Natural killer cell (primary cell): ENCODE measurements at regions of chr21 and their contacts with region 1.

Region 1: DNA sequence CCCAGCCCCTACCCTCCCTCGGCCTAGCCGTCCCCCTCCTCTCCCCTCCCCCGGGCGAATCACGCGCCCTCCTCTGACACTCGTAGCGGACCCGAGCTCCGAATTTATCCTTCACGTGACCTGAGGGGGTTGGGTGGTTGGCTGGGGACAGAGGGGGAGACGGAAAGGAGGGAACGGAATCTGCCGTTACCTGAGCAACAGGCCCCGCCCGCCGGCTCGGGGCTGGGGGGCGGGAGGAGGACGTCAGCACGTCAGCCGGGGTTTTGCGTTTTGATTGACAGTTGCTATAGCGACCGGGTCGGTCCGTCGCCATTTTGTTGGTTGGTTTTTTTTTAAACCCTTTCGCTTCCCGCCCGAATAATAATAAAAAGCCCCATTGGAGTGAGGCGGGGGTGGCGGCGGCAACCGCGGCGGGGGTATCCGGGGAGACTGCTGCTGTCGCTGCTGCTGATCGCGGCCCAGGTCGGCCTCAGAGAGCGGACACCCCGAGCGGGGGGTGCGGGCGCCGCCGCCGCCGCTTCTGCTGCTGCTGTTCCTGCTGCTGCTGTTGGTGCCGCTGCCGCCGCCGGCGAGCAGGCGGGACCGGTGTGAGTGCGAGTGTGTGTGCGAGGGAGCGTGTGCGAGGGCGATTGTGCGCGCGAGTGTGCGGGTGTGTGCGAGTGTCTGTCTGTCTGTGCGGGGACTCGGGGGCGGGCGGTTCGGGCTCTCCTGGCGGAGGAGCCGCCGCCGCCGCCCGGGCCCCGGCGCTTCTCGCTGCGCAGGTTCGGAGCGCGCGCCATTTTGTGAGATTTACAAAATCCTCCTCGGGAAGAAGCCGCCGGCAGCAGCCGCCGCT is at the start of gene DYRK1A:
- DNase-seq: peak; percentile 97 to 100
- ATAC-seq: peak; percentile 75 to 93 (median 82)
- H3K4me3 ChIP-seq: peak within 1 kb of the TSS; percentile 76
- H3K4me3 Mint-ChIP-seq: peak within 1 kb of the TSS; percentile 99
- H3K27ac ChIP-seq: peak within 1 kb of the TSS; percentile 95
- H3K27ac Mint-ChIP-seq: peak within 1 kb of the TSS; percentile 97 to 100
- H3K4me1 ChIP-seq: peaks cover 19% of the 10 kb centered on the region
- H3K4me1 Mint-ChIP-seq: peaks cover 46 to 53% of the 10 kb centered on the region in 2 donors
- H3K27me3 ChIP-seq: no peaks in the 10 kb centered on the region
- H3K27me3 Mint-ChIP-seq: no peaks in the 10 kb centered on the region
- CTCF ChIP-seq: no peak
- total RNA-seq, gene DYRK1A: 149 to 166 (median 153) TPM

Region 2: DNA sequence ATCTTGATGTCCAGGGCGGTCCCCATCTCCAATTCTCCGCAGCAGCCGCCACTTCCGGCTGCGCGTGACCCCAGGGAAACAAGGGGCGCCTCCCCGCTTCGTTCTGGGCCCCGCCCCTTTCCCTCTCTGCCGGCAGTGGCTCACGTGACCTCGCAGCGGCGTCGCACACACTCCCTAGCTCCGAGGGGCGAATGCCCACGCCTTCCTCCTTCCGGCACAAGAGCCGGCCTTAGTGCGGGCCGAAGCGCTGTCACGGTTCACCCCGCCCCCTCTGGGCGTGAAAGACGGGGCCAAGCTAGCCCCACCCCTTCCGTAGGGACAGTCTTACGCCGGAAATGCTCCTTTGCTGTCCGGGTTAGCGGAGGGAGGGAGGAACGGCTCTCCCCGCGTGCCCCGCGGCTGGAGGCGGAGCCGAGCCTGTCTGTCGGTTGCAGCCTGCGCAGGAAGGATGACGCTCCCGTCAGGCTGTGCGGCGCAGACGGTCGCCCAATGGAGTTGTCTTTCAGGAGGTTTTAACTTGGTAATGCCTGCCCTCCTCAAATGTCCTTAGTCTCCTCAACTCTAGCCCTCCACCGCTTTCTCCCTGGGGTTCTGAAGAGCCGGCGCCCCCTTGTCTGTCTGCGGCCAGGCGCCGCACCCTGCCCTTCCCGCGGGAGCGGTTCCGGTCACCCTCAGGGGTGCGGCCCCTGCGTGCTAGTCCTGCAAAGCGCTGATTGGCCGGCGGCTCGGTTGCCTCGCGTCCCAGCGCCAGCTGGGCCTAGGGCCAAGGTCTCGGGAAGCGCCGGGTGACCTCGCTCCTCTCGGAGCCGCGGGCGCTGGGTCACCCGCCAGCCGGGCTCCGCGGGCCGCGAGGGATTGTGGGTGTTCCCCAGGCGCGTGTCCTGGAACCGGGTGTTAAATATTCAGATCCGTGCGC is 99.2 kb before region 1 on chr21 and contains the start of gene VPS26C:
- intact Hi-C with region 1: loop called (anchors 1 kb)
- DNase-seq: peak; percentile 94 to 99
- ATAC-seq: peak; percentile 85 to 95 (median 86)
- H3K4me3 ChIP-seq: peak within 1 kb of the TSS; percentile 90
- H3K4me3 Mint-ChIP-seq: peak within 1 kb of the TSS; percentile 97
- H3K27ac ChIP-seq: peak within 1 kb of the TSS; percentile 99
- H3K27ac Mint-ChIP-seq: peak within 1 kb of the TSS; percentile 95 to 99
- H3K4me1 ChIP-seq: peaks cover 22% of the 10 kb centered on the region
- H3K4me1 Mint-ChIP-seq: peaks cover 32 to 52% of the 10 kb centered on the region in 2 donors
- H3K27me3 ChIP-seq: no peaks in the 10 kb centered on the region
- H3K27me3 Mint-ChIP-seq: no peaks in the 10 kb centered on the region
- CTCF ChIP-seq: no peak
- total RNA-seq, gene VPS26C: 71.1 to 84.7 (median 72.2) TPM

Region 3: DNA sequence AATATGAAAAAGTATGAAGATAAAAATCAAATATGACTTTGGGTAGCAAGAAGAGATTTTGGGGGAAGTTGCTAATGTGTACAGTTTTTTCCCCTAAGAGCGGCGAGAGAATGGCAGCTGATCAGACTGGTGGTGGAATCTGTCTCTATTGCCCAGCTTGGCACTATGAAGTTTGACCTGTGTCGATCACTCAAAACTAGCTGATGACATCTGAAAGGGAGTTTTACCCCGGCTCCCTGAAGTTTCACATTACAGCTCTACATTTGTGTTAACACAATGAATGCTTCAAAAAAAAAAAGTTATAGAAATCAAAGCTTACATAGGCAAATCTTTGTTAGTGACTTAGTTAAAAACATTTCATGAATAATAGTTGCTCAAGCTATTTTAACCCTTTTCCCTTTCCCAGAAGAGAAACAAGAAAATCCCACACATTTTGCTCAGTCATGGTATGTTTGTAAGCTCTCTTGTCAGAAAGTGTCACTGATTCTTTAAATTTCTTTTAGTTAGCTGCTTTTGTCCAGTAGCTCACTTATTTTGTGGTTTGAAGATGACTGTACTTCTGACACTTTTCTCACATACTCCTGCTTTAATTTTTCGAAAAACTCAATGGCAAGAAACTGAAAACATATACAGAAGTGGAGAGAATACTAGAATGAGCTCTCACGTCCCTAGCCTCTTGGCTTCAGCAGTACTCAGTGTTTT is 41.2 kb after region 1 on chr21:
- intact Hi-C with region 1: loop called (anchors 5 kb)
- DNase-seq: no peak
- ATAC-seq: peak; percentile 44 to 56 (median 49)
- H3K4me3 ChIP-seq: no peak overlapping the region
- H3K4me3 Mint-ChIP-seq: peak overlapping the region; percentile 56
- H3K27ac ChIP-seq: peak overlapping the region; percentile 24
- H3K27ac Mint-ChIP-seq: peak overlapping the region; percentile 80 to 85
- H3K4me1 ChIP-seq: peaks cover 36% of the 10 kb centered on the region
- H3K4me1 Mint-ChIP-seq: peaks cover 84 to 87% of the 10 kb centered on the region in 2 donors
- H3K27me3 ChIP-seq: no peaks in the 10 kb centered on the region
- H3K27me3 Mint-ChIP-seq: no peaks in the 10 kb centered on the region
- CTCF ChIP-seq: no peak

Region 4: GRCh38 chr21:37463083-37463801 is 96.5 kb after region 1 on chr21:
- intact Hi-C with region 1: loop called (anchors 2 kb)
- DNase-seq: peak in 1 of 2 donors; percentile 66
- ATAC-seq: peak; percentile 60 to 81 (median 60)
- H3K4me3 ChIP-seq: no peak overlapping the region
- H3K4me3 Mint-ChIP-seq: peak overlapping the region; percentile 79
- H3K27ac ChIP-seq: peak overlapping the region; percentile 3
- H3K27ac Mint-ChIP-seq: peak overlapping the region; percentile 87 to 91
- H3K4me1 ChIP-seq: peaks cover 23% of the 10 kb centered on the region
- H3K4me1 Mint-ChIP-seq: peaks cover 76 to 80% of the 10 kb centered on the region in 2 donors
- H3K27me3 ChIP-seq: no peaks in the 10 kb centered on the region
- H3K27me3 Mint-ChIP-seq: no peaks in the 10 kb centered on the region
- CTCF ChIP-seq: peak; percentile 27

Region 5: DNA sequence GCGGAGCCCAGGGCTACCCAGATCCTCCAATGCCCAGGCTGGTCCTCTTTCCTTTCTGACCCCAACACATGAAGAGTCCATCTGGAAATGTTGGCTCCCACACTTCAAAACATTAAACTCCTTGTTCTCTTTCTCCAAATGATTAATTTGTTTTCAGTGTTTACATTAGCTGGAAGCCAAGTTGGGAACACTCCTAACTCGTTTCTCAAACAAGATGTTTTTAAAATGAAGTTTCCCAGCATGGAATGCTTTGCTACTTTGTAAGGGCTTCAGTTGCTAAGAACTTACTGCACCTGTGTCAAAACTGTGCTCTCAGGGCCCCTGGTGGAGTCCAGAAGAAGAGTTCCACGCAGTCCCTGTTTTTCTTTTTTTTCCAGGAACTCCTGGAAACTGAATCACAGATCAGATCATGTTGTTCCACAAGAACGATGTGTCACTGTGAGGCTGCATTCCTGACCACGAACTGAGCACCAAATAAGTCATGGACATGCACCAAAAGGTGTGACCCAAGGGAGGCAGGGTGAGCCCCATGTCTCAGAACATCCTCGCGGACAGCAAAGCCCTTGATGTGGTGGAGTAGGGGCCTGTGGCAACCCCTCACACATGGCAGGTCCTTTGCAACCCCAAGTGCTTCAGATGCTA is 292.2 kb after region 1 on chr21:
- intact Hi-C with region 1: no loop called
- DNase-seq: no peak
- ATAC-seq: no peak
- H3K4me3 ChIP-seq: no peak overlapping the region
- H3K4me3 Mint-ChIP-seq: no peak overlapping the region
- H3K27ac ChIP-seq: no peak overlapping the region
- H3K27ac Mint-ChIP-seq: no peak overlapping the region
- H3K4me1 ChIP-seq: no peaks in the 10 kb centered on the region
- H3K4me1 Mint-ChIP-seq: no peaks in the 10 kb centered on the region
- H3K27me3 ChIP-seq: no peaks in the 10 kb centered on the region
- H3K27me3 Mint-ChIP-seq: peaks cover 0 to 9% of the 10 kb centered on the region in 2 donors
- CTCF ChIP-seq: no peak